PC-9 (cell line): ENCODE measurements at regions of chr14 and their contacts with region 1.

Region 1: DNA sequence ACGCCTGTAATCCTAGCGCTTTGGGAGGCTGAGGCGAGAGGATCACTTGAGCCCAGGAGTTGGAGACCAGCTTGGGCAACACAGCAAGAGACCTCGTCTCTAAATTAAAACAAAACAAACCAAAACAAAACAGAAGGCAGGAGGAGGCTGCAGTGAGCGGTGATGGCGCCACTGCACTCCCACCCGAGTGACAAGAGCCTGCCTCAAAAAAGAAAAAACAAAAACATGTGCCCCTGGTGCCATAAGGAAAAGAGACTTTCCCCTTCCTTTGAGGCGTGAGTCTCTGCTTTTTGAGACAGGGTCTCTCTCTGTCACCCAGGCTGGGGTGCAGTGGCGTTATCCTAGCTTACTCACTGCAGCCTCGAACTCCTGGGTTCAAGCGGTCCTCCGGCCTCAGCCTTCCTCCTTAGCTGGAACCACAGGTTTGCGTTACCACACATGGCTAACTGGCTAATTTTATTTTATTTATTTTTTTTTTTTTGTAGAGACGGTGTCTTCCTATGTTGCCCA is 9.0 kb upstream of the EAPP start:
- DNase-seq: no peak
- H3K4me3 ChIP-seq: no peak overlapping the region
- H3K27ac ChIP-seq: no peak overlapping the region
- H3K4me1 ChIP-seq: no peaks in the 10 kb centered on the region
- H3K27me3 ChIP-seq: no peaks in the 10 kb centered on the region
- CTCF ChIP-seq: no peak

Region 2: DNA sequence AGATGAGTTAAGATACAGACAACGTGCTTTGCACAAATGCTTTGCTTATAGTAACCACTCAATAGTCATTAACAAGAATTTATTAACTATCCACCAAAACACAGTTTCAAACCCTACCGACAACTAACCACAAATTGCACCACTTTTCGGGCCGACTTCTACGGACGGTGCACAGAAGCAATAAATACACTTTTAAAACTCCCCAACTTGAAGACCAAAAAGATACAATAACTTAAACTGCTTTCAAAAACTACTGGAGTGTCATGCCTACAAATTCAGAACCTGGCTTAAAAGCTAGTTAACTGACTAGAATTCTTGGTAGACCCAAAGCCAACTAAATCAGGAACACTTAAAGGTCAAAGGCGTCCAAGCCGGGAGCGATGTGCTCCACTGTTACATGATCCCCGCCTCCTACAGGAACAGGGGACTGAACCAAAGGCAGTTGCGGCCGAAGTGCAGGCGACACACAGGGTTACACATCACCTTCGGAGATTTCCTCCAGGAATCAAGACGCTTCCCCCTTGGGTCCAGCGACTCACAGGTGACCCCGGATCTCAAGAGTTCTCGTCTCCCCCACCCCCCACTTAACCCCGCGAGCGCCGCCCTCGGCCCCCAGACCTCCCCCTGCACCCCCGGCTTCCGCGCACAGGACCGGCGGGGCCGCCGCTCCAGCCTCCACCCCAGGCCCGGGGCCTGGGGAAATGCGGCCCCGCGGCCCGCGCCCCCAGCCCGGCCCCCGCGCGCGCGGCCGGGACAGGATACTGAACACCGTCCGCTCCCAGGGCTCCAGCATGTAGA is 87.0 kb before region 1 on chr14:
- CTCF ChIA-PET with region 1: no interaction called
- POLR2A ChIA-PET with region 1: no interaction called
- intact Hi-C with region 1: no loop called
- DNase-seq: peak; percentile 32 to 49
- H3K4me3 ChIP-seq: peak overlapping the region; percentile 67
- H3K27ac ChIP-seq: no peak overlapping the region
- H3K4me1 ChIP-seq: peaks cover 10% of the 10 kb centered on the region
- H3K27me3 ChIP-seq: no peaks in the 10 kb centered on the region
- CTCF ChIP-seq: no peak

Region 3: GRCh38 chr14:35458442-35458841 is 909.9 kb after region 1 on chr14:
- CTCF ChIA-PET with region 1: no interaction called
- POLR2A ChIA-PET with region 1: interaction called, 12 read pairs
- intact Hi-C with region 1: no loop called
- DNase-seq: no peak
- H3K4me3 ChIP-seq: no peak overlapping the region
- H3K27ac ChIP-seq: no peak overlapping the region
- H3K4me1 ChIP-seq: no peaks in the 10 kb centered on the region
- H3K27me3 ChIP-seq: no peaks in the 10 kb centered on the region
- CTCF ChIP-seq: no peak